ENCODE measurements at regions of chr14 and their contacts with region 1.

Region 1: GRCh38 chr14:54411371-54411770 is 14.6 kb downstream of the CDKN3 start:
- DNase-seq: no peak
- ATAC-seq: no peak
- H3K4me3 ChIP-seq: no peak overlapping the region
- H3K27ac ChIP-seq: no peak overlapping the region
- H3K4me1 ChIP-seq: no peaks in the 10 kb centered on the region
- H3K27me3 ChIP-seq: no peaks in the 10 kb centered on the region
- CTCF ChIP-seq: no peak
- POLR2A ChIP-seq: no peak
- RAD21 ChIP-seq: no peak

Region 2: DNA sequence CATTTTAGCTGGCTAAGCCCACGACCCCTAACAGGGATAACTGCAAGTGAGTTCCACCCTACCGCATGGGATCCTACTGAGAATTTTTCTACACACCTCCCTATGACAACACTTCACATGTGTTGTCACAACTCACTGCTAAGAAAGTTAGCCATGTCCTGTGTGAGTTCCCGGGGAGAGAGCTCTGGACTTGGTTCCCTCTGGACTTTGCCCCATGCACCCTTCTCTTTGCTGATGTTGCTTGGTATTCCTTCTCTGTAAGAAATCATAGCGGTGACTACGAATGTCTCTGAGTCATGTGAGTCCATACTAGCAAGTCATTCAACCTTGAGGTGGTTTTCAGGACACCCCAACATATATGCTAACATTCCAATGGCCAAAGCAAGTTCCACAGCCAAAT is 24.0 kb before region 1 on chr14:
- CTCF ChIA-PET with region 1: no interaction called
- POLR2A ChIA-PET with region 1: no interaction called
- dilution Hi-C with region 1: no loop called
- in situ Hi-C with region 1: no loop called
- intact Hi-C with region 1: no loop called
- DNase-seq: no peak
- ATAC-seq: no peak
- H3K4me3 ChIP-seq: no peak overlapping the region
- H3K27ac ChIP-seq: no peak overlapping the region
- H3K4me1 ChIP-seq: no peaks in the 10 kb centered on the region; the same call in 1 of the 2 replicates
- H3K27me3 ChIP-seq: peaks cover 26% of the 10 kb centered on the region
- CTCF ChIP-seq: no peak
- POLR2A ChIP-seq: no peak
- RAD21 ChIP-seq: no peak

Region 3: DNA sequence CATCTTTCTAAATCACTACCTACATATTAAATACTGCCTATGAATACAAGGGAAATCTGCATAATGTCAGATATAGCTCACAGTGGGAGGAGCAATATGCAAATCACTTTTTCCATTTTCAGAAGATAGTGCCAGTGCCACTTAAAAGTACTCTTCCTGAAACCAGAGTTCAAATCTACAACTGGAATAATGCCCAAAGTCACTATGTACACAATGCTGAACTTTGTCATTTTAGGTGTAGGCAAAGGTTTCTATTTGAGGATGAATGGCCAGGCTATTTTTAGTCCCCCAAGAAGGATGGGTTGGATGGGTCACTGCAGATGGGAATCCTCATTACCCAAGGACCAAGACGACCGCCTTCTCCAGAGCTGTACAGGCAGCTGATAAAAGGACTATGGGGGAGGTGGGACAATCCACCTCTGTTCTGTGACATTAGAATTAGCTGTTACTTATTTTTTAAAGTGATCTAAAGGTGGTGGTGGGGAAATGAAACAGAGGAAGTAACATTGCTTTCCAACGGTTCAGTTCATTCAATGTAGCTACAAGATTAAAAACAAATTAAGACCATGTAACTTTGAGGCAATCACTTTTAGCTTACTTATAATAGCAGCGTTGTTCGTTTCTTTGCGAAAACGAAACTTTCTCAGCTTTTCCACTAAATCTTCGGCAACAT is 71.8 kb after region 1 on chr14:
- CTCF ChIA-PET with region 1: no interaction called
- POLR2A ChIA-PET with region 1: interaction called, 15 read pairs
- dilution Hi-C with region 1: no loop called
- in situ Hi-C with region 1: no loop called
- intact Hi-C with region 1: no loop called
- DNase-seq: no peak
- ATAC-seq: no peak
- H3K4me3 ChIP-seq: no peak overlapping the region
- H3K27ac ChIP-seq: no peak overlapping the region
- H3K4me1 ChIP-seq: peaks cover 3% of the 10 kb centered on the region; the same call in 1 of the 2 replicates
- H3K27me3 ChIP-seq: no peaks in the 10 kb centered on the region
- CTCF ChIP-seq: no peak
- POLR2A ChIP-seq: no peak
- RAD21 ChIP-seq: no peak

Measured in IMR-90 (cell line).